B cell (primary cell): ENCODE measurements at regions of chr6 and their contacts with region 1.

Region 1: GRCh38 chr6:25053875-25054371 is 118.2 kb upstream of the RIPOR2 start:
- DNase-seq: peak; percentile 79
- ATAC-seq: peak; percentile 63
- H3K4me3 ChIP-seq: peak overlapping the region in 1 of 5 experiments; percentile 3
- H3K4me3 Mint-ChIP-seq: peak overlapping the region; percentile 66
- H3K27ac ChIP-seq: peak overlapping the region; percentile 71 to 76
- H3K27ac Mint-ChIP-seq: peak overlapping the region; percentile 93
- H3K4me1 ChIP-seq: peaks cover 92 to 94% of the 10 kb centered on the region in 2 donors
- H3K4me1 Mint-ChIP-seq: peaks cover 85% of the 10 kb centered on the region
- H3K27me3 ChIP-seq: no peaks in the 10 kb centered on the region
- H3K27me3 Mint-ChIP-seq: no peaks in the 10 kb centered on the region
- CTCF ChIP-seq: peak; percentile 34

Region 2: DNA sequence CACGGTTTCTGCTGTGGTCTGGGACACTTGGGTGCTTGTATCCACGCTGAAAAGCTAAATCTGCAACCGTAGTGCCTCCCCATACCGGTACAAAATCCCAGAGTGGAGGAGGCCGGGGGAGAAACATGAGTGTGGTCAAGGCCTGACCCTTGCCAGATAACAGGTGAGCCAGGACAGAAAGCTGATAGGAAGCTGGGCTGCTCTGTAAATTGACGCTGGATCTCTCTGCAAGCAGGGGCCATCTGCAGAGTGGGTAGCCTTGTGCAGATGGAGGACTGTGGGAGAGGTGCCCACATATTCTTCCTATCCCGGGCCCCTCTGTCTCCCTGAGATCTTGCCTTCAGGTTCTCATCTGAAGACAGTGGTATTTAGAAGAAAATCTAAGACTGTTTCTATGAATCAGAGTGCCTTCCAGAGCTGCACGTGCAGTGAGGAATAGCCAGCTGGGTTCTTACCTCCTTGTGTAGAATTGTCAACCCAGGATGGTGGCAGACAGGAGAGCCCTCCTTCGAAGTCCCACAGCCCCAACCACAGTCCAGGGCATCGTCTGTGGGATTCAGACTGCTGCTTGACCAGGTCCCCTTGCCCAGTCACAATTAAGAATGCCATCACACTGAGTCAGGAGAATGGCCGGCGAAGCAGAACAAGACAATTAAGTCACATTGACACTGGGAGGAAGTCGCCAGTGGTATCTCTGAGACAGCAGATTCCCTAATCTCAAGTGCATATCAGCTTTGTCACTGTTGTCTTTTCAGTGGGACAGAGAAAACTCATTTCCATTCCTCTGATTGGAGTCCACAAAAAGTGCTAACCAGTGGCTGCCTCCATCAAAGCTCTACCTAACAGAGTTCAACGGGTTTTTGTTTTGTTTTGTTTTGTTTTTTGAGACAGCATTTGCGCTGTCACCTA is 18.1 kb before region 1 on chr6:
- CTCF ChIA-PET with region 1: interaction called, 34 read pairs
- POLR2A ChIA-PET with region 1: interaction called, 3 read pairs
- intact Hi-C with region 1: loop called (anchors 1 kb)
- DNase-seq: peak; percentile 50
- ATAC-seq: peak; percentile 57
- H3K4me3 ChIP-seq: peak overlapping the region in 4 of 5 experiments; percentile 28 to 65 (median 50)
- H3K4me3 Mint-ChIP-seq: peak overlapping the region; percentile 89
- H3K27ac ChIP-seq: peak overlapping the region; percentile 76 to 78
- H3K27ac Mint-ChIP-seq: peak overlapping the region; percentile 91
- H3K4me1 ChIP-seq: peaks cover 53 to 63% of the 10 kb centered on the region in 2 donors
- H3K4me1 Mint-ChIP-seq: peaks cover 66% of the 10 kb centered on the region
- H3K27me3 ChIP-seq: no peaks in the 10 kb centered on the region
- H3K27me3 Mint-ChIP-seq: no peaks in the 10 kb centered on the region
- CTCF ChIP-seq: no peak

Region 3: GRCh38 chr6:25042036-25042521 is 11.8 kb before region 1 on chr6:
- CTCF ChIA-PET with region 1: interaction called, 52 read pairs
- POLR2A ChIA-PET with region 1: interaction called, 4 read pairs
- intact Hi-C with region 1: loop called (anchors 1 kb)
- DNase-seq: peak; percentile 75
- ATAC-seq: peak; percentile 69
- H3K4me3 ChIP-seq: peak overlapping the region in 4 of 5 experiments; percentile 41 to 73 (median 66)
- H3K4me3 Mint-ChIP-seq: peak overlapping the region; percentile 91
- H3K27ac ChIP-seq: peak overlapping the region; percentile 50 to 90
- H3K27ac Mint-ChIP-seq: peak overlapping the region; percentile 96
- H3K4me1 ChIP-seq: peaks cover 58 to 63% of the 10 kb centered on the region in 2 donors
- H3K4me1 Mint-ChIP-seq: peaks cover 71% of the 10 kb centered on the region
- H3K27me3 ChIP-seq: no peaks in the 10 kb centered on the region
- H3K27me3 Mint-ChIP-seq: no peaks in the 10 kb centered on the region
- CTCF ChIP-seq: no peak

Region 4: DNA sequence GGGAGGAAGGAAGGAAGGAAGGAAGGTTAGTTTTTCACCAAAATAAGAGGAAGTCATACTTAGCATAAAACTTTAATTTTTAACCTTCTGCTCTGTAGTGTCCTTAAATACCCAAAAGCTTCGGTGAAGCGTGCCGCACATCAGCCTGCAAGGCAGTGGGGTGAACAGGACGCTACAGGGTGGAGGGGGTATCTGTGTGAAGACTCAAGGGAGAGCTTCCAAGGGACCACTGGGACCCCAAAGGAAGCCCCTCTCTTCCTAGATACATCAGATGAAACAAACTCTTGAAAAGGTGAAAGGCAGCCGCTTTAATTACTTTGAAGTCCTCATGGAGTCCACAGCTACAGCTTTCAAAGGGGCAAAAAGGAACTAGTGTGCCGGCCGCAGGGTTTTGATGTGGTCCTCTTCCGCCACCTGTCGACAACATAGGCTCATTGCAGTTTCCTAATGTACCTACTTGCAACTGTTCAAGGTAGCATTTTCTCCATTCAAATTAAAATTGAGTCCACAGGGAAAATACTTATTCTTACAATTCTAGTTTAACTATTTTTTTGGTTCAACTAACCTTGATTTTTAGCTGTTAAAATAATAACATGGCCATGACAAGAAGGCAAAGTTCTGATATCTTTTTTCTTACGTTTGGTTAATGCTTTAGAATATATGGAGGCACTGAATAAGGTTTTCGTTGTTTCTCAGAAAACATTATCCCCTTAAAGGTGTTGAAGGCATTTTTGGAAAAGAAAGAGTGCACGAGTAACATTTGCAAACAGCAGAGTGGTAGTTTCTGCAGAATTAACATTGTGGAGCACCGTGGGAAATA is 16.8 kb after region 1 on chr6:
- CTCF ChIA-PET with region 1: interaction called, 26 read pairs
- POLR2A ChIA-PET with region 1: no interaction called
- intact Hi-C with region 1: loop called (anchors 1 kb)
- DNase-seq: peak; percentile 93
- ATAC-seq: peak; percentile 97
- H3K4me3 ChIP-seq: peak overlapping the region in 4 of 5 experiments; percentile 31 to 72 (median 48)
- H3K4me3 Mint-ChIP-seq: peak overlapping the region; percentile 86
- H3K27ac ChIP-seq: peak overlapping the region; percentile 74 to 80
- H3K27ac Mint-ChIP-seq: peak overlapping the region; percentile 97
- H3K4me1 ChIP-seq: peaks cover 0 to 4% of the 10 kb centered on the region in 2 donors
- H3K4me1 Mint-ChIP-seq: peaks cover 9% of the 10 kb centered on the region
- H3K27me3 ChIP-seq: no peaks in the 10 kb centered on the region
- H3K27me3 Mint-ChIP-seq: no peaks in the 10 kb centered on the region
- CTCF ChIP-seq: peak; percentile 95